ENCODE measurements at regions of chr5 and their contacts with region 1.

Region 1: GRCh38 chr5:137778772-137779564 is 24.8 kb upstream of the HNRNPA0 start:
- DNase-seq: peak; percentile 82
- H3K4me3 Mint-ChIP-seq: no peak overlapping the region
- H3K27ac Mint-ChIP-seq: no peak overlapping the region
- H3K4me1 Mint-ChIP-seq: no peaks in the 10 kb centered on the region
- H3K27me3 Mint-ChIP-seq: peaks cover 24% of the 10 kb centered on the region
- CTCF ChIP-seq: peak; percentile 86

Region 2: GRCh38 chr5:137629646-137630045 is 149.3 kb before region 1 on chr5:
- CTCF ChIA-PET with region 1: interaction called, 12 read pairs
- POLR2A ChIA-PET with region 1: interaction called, 3 read pairs
- intact Hi-C with region 1: no loop called
- DNase-seq: peak; percentile 87
- H3K4me3 Mint-ChIP-seq: no peak overlapping the region
- H3K27ac Mint-ChIP-seq: no peak overlapping the region
- H3K4me1 Mint-ChIP-seq: no peaks in the 10 kb centered on the region
- H3K27me3 Mint-ChIP-seq: no peaks in the 10 kb centered on the region
- CTCF ChIP-seq: peak; percentile 99

Region 3: DNA sequence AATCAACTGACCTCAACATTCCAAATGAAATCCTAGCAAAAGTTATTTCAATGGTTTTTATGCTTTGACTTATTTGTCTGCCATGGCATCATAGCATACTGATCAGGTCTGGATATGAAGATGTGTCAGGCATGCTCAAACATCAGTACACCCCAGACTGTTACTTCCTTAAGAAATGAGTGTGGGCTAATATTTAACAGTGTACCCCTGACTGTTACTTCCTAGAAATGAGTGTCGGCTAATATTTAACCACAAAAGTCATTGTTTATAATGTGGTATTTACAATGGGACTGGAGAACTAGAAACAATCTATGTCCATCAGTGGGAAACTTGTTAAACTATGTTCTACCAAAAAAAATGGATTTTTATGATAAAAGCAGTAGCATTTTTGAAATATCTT is 13.3 kb after region 1 on chr5:
- CTCF ChIA-PET with region 1: interaction called, 27 read pairs
- POLR2A ChIA-PET with region 1: no interaction called
- intact Hi-C with region 1: no loop called
- DNase-seq: no peak
- H3K4me3 Mint-ChIP-seq: no peak overlapping the region
- H3K27ac Mint-ChIP-seq: no peak overlapping the region
- H3K4me1 Mint-ChIP-seq: no peaks in the 10 kb centered on the region
- H3K27me3 Mint-ChIP-seq: peaks cover 29% of the 10 kb centered on the region
- CTCF ChIP-seq: no peak

Region 4: GRCh38 chr5:137822158-137822764 is 43.3 kb after region 1 on chr5:
- CTCF ChIA-PET with region 1: interaction called, 59 read pairs
- POLR2A ChIA-PET with region 1: no interaction called
- intact Hi-C with region 1: loop called (anchors 1 kb)
- DNase-seq: peak; percentile 72
- H3K4me3 Mint-ChIP-seq: no peak overlapping the region
- H3K27ac Mint-ChIP-seq: no peak overlapping the region
- H3K4me1 Mint-ChIP-seq: no peaks in the 10 kb centered on the region
- H3K27me3 Mint-ChIP-seq: peaks cover 29% of the 10 kb centered on the region
- CTCF ChIP-seq: peak; percentile 55

Region 5: GRCh38 chr5:138029501-138029900 is 250.5 kb after region 1 on chr5:
- CTCF ChIA-PET with region 1: interaction called, 75 read pairs
- POLR2A ChIA-PET with region 1: interaction called, 4 read pairs
- intact Hi-C with region 1: no loop called
- DNase-seq: no peak
- H3K4me3 Mint-ChIP-seq: no peak overlapping the region
- H3K27ac Mint-ChIP-seq: peak overlapping the region; percentile 31
- H3K4me1 Mint-ChIP-seq: peaks cover 52% of the 10 kb centered on the region
- H3K27me3 Mint-ChIP-seq: no peaks in the 10 kb centered on the region
- CTCF ChIP-seq: no peak

Region 6: DNA sequence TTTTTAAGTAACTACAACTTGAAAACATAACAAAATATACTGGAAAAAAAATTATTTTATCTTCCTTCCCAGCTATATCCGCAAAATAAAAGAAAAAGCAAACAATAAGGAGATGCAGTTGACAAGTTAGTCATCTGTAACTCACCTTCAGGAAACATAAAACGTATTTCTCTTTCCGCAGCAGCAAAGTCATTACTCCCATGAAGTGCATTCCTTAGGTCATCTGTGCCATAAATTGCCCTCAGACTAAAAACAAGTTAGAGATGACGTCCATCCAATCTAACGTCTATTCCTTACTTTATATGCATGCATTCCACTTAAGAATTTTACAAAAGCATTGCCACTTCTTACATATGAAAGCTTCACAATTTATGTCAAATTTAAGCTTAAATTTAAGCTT is 349.4 kb after region 1 on chr5:
- CTCF ChIA-PET with region 1: interaction called, 44 read pairs
- POLR2A ChIA-PET with region 1: interaction called, 6 read pairs
- intact Hi-C with region 1: loop called (anchors 1 kb)
- DNase-seq: no peak
- H3K4me3 Mint-ChIP-seq: no peak overlapping the region
- H3K27ac Mint-ChIP-seq: no peak overlapping the region
- H3K4me1 Mint-ChIP-seq: peaks cover under 1% of the 10 kb centered on the region
- H3K27me3 Mint-ChIP-seq: peaks cover 24% of the 10 kb centered on the region
- CTCF ChIP-seq: no peak